ENCODE measurements at regions of chr1 and their contacts with region 1.

Region 1: GRCh38 chr1:63327417-63328139 is 5.2 kb downstream of the FOXD3 start:
- DNase-seq: peak; percentile 88
- H3K4me3 Mint-ChIP-seq: peak overlapping the region; percentile 36
- H3K27ac Mint-ChIP-seq: peak overlapping the region; percentile 78
- H3K4me1 Mint-ChIP-seq: peaks cover 23% of the 10 kb centered on the region
- H3K27me3 Mint-ChIP-seq: peaks cover 71% of the 10 kb centered on the region

Region 2: GRCh38 chr1:62841587-62842169 is 485.9 kb before region 1 on chr1:
- intact Hi-C with region 1: loop called (anchors 10 kb)
- DNase-seq: peak; percentile 76
- H3K4me3 Mint-ChIP-seq: no peak overlapping the region
- H3K27ac Mint-ChIP-seq: no peak overlapping the region
- H3K4me1 Mint-ChIP-seq: no peaks in the 10 kb centered on the region
- H3K27me3 Mint-ChIP-seq: no peaks in the 10 kb centered on the region

Region 3: GRCh38 chr1:62856960-62857359 is 470.6 kb before region 1 on chr1:
- intact Hi-C with region 1: no loop called
- DNase-seq: no peak
- H3K4me3 Mint-ChIP-seq: no peak overlapping the region
- H3K27ac Mint-ChIP-seq: no peak overlapping the region
- H3K4me1 Mint-ChIP-seq: no peaks in the 10 kb centered on the region
- H3K27me3 Mint-ChIP-seq: no peaks in the 10 kb centered on the region

Region 4: DNA sequence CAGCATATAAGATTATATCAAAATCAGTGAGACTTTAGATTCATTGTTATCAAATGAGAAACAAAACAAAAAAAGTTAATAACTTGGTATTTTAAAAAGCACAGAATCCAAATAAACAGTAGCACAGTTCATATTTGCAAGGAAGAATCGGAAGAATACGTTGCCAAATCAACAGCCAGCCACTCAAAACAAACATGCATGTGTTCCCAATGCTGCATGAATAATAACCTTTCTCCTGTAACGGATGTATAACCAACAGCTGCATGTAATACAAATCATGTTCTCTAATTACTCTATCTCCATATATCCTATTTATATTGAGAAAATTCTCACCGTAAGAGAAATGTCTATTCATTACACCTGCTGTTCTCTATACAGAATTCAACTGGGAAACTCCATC is 104.2 kb before region 1 on chr1:
- intact Hi-C with region 1: no loop called
- DNase-seq: no peak
- H3K4me3 Mint-ChIP-seq: no peak overlapping the region
- H3K27ac Mint-ChIP-seq: no peak overlapping the region
- H3K4me1 Mint-ChIP-seq: no peaks in the 10 kb centered on the region
- H3K27me3 Mint-ChIP-seq: no peaks in the 10 kb centered on the region

Region 5: DNA sequence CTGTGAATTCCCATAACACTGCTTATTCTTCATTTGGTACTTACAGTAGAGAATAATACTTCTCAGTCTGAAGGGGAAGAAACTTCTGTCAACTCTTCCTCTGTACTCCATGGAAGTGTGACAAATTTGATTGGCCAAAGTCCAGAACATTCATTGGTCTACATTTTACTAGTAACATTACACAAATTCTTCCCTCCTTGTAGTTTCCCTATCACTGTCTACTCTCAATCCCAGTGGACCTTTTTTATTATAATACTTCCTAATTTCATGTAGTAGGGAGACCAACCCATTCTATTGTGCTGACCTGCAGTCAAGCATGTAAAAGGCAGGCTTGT is 114.5 kb after region 1 on chr1:
- intact Hi-C with region 1: loop called (anchors 1 kb)
- DNase-seq: no peak
- H3K4me3 Mint-ChIP-seq: no peak overlapping the region
- H3K27ac Mint-ChIP-seq: no peak overlapping the region
- H3K4me1 Mint-ChIP-seq: peaks cover 3% of the 10 kb centered on the region
- H3K27me3 Mint-ChIP-seq: no peaks in the 10 kb centered on the region

Region 6: DNA sequence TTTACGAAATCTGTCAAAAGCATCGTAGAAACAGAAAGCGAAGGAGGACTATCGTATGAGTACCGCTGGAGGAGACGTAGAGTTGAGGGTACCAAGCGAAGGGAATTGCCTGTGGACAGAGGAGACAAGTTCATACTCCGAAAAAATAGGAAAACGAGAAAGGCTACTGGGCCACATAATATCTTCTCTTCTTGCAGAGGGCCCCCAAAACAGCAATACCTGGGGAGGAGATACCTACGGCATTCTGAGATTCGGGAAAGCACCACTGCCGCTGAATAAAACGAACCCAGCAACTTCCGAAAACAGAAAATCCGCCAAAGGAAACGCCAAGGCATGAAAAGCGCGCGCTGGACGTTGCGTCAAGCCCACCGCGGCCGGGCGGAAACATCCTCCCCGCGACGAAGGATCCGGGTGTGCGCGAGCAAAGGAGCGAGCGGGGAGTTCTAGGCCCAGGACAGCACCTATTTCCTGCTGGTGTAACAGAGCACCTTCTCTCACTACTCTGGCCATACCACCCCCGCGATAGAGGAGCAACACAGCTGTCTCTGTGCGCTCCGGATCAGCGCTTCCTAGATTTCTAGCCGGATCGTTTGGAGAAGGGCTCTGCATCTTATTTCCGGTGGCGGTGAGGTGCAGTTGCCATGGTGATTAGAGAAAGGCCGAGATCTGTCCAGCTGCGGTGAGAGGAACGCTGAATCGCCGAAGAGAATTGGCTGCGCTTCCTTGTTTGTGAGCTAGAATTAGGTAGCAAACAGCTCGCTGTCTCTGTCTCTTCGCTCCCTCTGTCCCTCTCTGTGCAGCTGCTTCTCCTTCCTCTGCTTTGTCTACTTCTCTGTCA is 195.5 kb after region 1 on chr1 and contains the starts of genes EFCAB7 and ITGB3BP:
- intact Hi-C with region 1: loop called (anchors 5 kb)
- DNase-seq: peak; percentile 96
- H3K4me3 Mint-ChIP-seq: peak within 1 kb of the TSS; percentile 87
- H3K27ac Mint-ChIP-seq: peak within 1 kb of the TSS; percentile 98
- H3K4me1 Mint-ChIP-seq: peaks cover 29% of the 10 kb centered on the region
- H3K27me3 Mint-ChIP-seq: no peaks in the 10 kb centered on the region
- total RNA-seq, gene EFCAB7: 6.6 and 7.8 TPM in 2 replicates
- total RNA-seq, gene ITGB3BP: 51.1 and 53.4 TPM in 2 replicates

Region 7: DNA sequence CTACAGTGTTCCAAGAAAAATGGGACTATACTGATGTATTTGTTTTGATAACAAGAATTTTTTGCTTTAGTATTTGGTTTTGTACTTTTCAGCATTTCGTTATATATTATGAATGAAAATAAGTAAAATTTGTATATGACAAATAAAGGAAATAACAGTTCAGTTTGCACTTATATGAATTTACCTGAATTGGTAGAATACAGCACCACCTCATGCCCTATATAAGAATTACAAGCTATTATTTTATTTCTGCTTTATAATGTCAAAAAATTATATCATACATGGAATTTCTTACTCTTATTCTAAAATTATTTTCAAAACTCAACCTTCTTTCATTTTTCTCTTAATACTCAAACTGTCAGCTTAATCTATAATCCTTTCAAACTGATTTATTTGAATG is 210.4 kb after region 1 on chr1:
- intact Hi-C with region 1: loop called (anchors 2 kb)
- DNase-seq: no peak
- H3K4me3 Mint-ChIP-seq: no peak overlapping the region
- H3K27ac Mint-ChIP-seq: no peak overlapping the region
- H3K4me1 Mint-ChIP-seq: no peaks in the 10 kb centered on the region
- H3K27me3 Mint-ChIP-seq: no peaks in the 10 kb centered on the region